Mammary epithelial cell (primary cell): ENCODE measurements at regions of chr1 and their contacts with region 1.

Region 1: DNA sequence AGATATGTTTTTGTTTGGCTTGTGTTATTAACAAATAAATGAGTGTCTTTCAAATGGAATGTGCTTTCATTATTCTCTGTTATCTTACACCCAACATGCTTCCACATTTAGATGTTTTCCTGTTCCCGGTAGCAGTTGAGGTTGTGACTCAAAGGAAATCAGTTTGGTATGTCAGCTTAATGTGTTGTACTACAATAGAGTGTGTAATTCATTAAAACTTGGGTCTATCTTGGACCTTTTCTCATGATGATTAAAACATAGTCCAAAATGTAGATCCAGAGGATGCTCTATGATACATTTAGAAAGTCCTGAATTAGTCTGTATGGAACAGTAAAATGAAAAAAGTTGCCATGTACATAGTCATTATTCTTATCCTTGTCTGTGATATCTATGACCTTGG is 26.7 kb downstream of the RTCA start:
- DNase-seq: no peak
- H3K4me3 ChIP-seq: no peak overlapping the region
- H3K27ac ChIP-seq: no peak overlapping the region
- H3K4me1 ChIP-seq: no peaks in the 10 kb centered on the region
- H3K27me3 ChIP-seq: no peaks in the 10 kb centered on the region
- CTCF ChIP-seq: no peak

Region 2: DNA sequence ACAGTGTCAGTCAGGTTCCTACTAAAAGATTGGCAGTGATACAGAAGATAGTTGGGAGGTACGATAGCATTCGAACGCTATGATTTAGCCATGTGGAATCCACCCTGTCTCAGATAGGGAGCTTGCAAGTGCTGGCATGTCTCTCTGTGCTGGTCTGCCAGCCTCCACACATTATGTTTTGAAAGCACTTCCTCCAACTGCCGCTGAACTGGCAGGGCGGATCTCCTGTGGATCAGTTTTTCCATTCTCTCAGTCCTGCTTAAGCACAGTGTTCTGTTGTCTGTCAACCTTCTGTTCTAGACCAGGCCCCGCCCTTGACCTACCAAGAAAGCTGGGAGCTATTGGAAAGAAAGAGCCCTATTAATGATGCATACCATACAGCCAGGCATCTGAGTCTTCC is 712.3 kb before region 1 on chr1:
- CTCF ChIA-PET with region 1: no interaction called
- dilution Hi-C with region 1: no loop called
- in situ Hi-C with region 1: no loop called
- intact Hi-C with region 1: no loop called
- DNase-seq: peak; percentile 97
- H3K4me3 ChIP-seq: no peak overlapping the region
- H3K27ac ChIP-seq: peak overlapping the region; percentile 84
- H3K4me1 ChIP-seq: peaks cover 20% of the 10 kb centered on the region
- H3K27me3 ChIP-seq: no peaks in the 10 kb centered on the region
- CTCF ChIP-seq: peak; percentile 31 to 44

Region 3: DNA sequence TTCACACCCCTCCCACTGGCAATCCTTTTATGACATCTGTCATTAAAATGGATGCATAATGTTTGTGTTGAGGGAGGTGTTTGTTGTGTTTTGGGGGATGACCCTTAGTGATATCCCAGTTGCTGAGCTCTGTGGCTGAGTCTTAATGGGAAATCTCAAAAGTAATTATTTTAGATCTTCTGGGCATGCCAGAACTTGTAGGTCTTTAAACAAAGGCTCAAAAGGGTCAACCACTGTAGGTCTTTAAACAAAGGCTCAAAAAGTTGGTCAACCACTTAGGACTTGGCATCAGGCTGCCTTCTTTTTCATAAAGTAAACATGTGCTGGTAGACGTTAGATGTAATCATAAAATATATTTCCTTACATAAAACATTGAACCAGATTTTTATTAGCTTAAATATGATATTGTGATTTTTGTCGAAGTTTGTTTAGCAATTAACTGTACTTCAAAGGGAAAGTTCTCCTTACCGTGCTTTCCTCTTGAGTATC is 137.7 kb after region 1 on chr1:
- CTCF ChIA-PET with region 1: interaction called, 10 read pairs
- dilution Hi-C with region 1: no loop called
- in situ Hi-C with region 1: no loop called
- intact Hi-C with region 1: no loop called
- DNase-seq: peak; percentile 47
- H3K4me3 ChIP-seq: no peak overlapping the region
- H3K27ac ChIP-seq: no peak overlapping the region
- H3K4me1 ChIP-seq: peaks cover 7% of the 10 kb centered on the region
- H3K27me3 ChIP-seq: no peaks in the 10 kb centered on the region
- CTCF ChIP-seq: no peak